A549 (cell line): ENCODE measurements at regions of chr22 and their contacts with region 1.

Region 1: GRCh38 chr22:17559188-17559587 is 4.1 kb upstream of the SLC25A18 start:
- DNase-seq: no peak
- ATAC-seq: no peak
- H3K4me3 ChIP-seq: no peak overlapping the region
- H3K27ac ChIP-seq: no peak overlapping the region
- H3K4me1 ChIP-seq: peaks cover 8% of the 10 kb centered on the region; the same call in 1 of the 3 replicates
- CTCF ChIP-seq: no peak
- EP300 ChIP-seq: no peak
- POLR2A ChIP-seq: no peak
- RAD21 ChIP-seq: no peak

Region 2: GRCh38 chr22:17258015-17258787 is 301.0 kb before region 1 on chr22:
- CTCF ChIA-PET with region 1: no interaction called
- POLR2A ChIA-PET with region 1: no interaction called
- DNase-seq: no peak
- ATAC-seq: no peak
- H3K4me3 ChIP-seq: no peak overlapping the region
- H3K27ac ChIP-seq: no peak overlapping the region
- H3K4me1 ChIP-seq: no peaks in the 10 kb centered on the region
- CTCF ChIP-seq: no peak
- EP300 ChIP-seq: no peak
- POLR2A ChIP-seq: no peak
- RAD21 ChIP-seq: no peak

Region 3: GRCh38 chr22:17471886-17472535 is 87.2 kb before region 1 on chr22:
- CTCF ChIA-PET with region 1: no interaction called
- POLR2A ChIA-PET with region 1: no interaction called
- DNase-seq: no peak
- ATAC-seq: no peak
- H3K4me3 ChIP-seq: no peak overlapping the region
- H3K27ac ChIP-seq: no peak overlapping the region
- H3K4me1 ChIP-seq: no peaks in the 10 kb centered on the region
- CTCF ChIP-seq: no peak
- EP300 ChIP-seq: no peak
- POLR2A ChIP-seq: no peak
- RAD21 ChIP-seq: no peak

Region 4: DNA sequence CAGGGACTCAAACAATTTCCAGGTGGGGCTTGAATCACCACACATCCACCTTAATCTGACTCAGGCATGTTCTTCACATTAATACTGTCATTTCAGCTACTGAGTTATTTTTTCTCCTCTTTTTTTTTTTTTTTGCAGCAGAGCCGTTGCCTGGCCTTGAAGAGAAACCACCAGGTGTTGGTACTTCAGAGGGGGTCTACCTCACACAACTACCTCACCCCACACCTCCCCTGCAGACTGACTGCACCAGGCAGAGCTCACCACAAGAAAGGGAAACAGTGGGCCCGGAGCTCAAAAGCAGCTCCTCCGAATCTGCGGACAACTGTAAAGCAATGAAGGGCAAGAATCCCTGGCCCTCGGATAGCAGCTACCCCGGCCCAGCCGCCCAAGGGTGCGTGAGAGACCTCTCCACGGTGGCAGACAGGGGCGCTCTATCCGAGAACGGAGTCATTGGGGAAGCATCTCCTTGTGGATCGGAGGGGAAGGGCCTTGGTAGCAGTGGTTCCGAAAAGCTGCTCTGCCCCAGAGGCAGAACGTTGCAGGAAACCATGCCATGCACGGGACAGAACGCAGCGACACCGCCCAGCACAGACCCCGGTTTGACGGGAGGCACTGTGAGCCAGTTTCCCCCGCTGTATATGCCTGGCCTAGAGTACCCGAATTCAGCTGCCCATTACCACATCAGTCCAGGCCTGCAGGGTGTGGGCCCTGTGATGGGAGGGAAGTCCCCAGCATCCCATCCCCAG is 11.0 kb before region 1 on chr22:
- CTCF ChIA-PET with region 1: interaction called, 17 read pairs
- POLR2A ChIA-PET with region 1: no interaction called
- DNase-seq: no peak
- ATAC-seq: no peak
- H3K4me3 ChIP-seq: no peak overlapping the region
- H3K27ac ChIP-seq: no peak overlapping the region
- H3K4me1 ChIP-seq: no peaks in the 10 kb centered on the region
- CTCF ChIP-seq: no peak
- EP300 ChIP-seq: no peak
- POLR2A ChIP-seq: no peak
- RAD21 ChIP-seq: no peak

Region 5: DNA sequence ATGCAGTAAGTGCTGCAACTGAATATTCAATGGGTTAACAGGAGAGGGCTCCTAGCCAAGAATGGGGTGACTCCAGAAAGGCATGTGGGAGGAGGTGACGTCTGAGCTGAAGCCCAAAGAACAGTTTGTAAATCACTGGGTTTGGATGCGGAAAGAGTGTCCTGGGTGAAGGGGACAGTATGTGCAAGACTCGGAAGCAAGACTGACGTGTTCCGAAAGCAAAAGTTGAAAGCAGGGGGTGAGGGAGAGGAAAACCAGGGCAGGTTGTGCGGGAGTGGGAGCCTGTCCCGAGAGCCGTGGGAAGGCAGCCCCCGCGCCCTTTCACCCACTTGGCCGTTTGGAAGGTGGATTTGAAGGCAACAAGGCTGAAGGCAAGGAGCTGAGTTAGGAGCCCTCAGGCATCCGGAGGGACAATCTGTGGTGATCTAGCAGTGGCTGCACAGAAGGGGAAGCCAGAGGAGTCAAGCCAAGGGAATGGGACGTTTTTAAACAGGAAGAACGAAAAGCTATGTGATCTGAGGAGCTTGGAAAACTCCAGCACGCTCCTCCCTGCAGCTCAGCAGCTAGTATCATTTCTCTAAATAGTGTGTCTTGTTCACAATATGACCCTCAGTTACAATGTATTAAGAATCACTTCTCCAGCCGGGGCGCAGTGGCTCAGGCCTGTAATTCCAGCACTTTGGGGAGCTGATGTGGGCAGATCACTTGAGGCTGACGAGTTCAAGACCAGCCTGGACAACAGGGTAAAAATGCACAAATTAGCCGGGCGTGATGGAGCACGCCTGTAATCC is 11.9 kb after region 1 on chr22:
- CTCF ChIA-PET with region 1: interaction called, 18 read pairs
- POLR2A ChIA-PET with region 1: no interaction called
- DNase-seq: no peak
- ATAC-seq: peak in 1 of 2 experiments; percentile 33; a peak in 1 of 6 replicates
- H3K4me3 ChIP-seq: no peak overlapping the region
- H3K27ac ChIP-seq: no peak overlapping the region
- H3K4me1 ChIP-seq: 0 out of 3 replicates have a peak, but pooled peaks cover 6% of the 10 kb centered on the region
- CTCF ChIP-seq: no peak
- EP300 ChIP-seq: no peak
- POLR2A ChIP-seq: no peak
- RAD21 ChIP-seq: no peak

Region 6: DNA sequence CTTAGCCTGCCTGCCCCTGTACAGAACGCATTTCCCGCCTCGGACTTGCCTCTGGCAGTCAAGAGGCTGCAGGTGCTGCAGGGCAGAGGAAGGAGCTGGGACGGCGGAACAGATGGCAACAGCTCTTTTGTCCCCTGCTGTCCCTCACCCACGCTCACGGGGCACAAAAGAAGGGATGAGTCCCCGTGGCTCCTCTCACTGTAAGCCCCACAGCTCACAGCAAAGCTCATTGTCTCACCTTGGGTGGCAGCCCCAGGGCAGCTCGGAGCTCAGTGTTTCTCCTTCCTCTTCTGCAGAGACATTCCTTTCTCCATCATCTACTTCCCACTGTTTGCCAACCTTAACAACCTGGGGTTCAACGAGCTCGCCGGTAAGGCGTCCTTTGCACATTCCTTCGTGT is 28.4 kb after region 1 on chr22:
- CTCF ChIA-PET with region 1: interaction called, 14 read pairs
- POLR2A ChIA-PET with region 1: no interaction called
- DNase-seq: no peak
- ATAC-seq: no peak
- H3K4me3 ChIP-seq: no peak overlapping the region
- H3K27ac ChIP-seq: no peak overlapping the region
- H3K4me1 ChIP-seq: no peaks in the 10 kb centered on the region
- CTCF ChIP-seq: no peak
- EP300 ChIP-seq: no peak
- POLR2A ChIP-seq: no peak
- RAD21 ChIP-seq: no peak

Region 7: DNA sequence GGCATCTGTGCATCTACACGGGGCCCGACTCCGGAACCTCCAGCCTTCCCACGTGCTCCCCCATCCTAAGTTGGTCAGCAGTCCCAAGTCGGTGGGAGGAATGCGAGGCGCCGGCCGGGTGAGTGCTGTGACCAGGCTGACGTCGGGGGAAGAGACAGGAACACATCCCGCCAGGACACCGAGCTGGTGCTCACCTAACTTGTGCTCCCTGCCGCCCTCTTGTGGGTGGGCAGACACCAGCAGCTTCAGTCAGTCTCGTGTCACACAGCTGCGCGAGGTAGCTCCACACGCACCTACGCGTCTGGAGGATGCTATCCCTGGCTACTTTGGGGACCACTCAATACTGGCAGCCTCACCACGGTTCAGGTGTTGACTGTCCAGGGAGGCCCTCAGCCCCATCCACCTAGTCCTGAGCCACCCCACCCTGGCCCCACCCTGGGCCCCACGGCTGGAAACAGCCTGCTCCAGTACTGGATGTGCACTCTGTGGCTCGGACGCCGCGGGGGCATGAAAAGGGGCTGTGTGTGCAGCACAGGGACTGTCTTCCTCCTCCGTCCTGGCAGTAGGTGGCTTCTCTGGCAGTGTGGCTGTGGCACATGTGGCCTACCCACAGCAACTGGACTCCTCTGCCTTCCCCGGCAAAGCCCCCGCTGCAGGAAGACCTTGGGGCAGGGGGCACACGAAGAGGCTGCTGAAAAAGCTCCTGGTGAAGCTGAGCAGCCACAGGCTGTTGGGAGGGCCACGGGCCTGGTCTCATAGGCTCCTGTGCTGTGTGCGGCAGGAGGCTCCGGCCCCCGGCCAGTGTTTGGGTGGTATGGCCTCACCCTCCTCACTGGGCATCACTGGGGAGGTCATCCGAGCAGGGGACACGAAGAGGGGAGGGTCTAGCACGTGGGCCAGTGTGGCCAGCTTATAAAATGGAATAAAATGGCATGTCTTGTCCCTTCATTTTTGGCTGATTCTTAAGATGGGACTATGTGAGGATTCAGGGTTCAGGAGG is 226.3 kb after region 1 on chr22:
- CTCF ChIA-PET with region 1: interaction called, 37 read pairs
- POLR2A ChIA-PET with region 1: no interaction called
- DNase-seq: peak; percentile 31 to 67
- ATAC-seq: peak; percentile 45 to 73; a peak in 4 of 6 replicates
- H3K4me3 ChIP-seq: no peak overlapping the region
- H3K27ac ChIP-seq: peak overlapping the region; percentile 45; a peak in 2 of 6 replicates
- H3K4me1 ChIP-seq: peaks cover 25% of the 10 kb centered on the region
- CTCF ChIP-seq: peak; percentile 46
- EP300 ChIP-seq: no peak
- POLR2A ChIP-seq: no peak
- RAD21 ChIP-seq: peak; percentile 38 to 46; a peak in 3 of 5 replicates